Aorta (tissue), 5 donors: ENCODE measurements at regions of chr16 and their contacts with region 1.

Region 1: GRCh38 chr16:81035398-81035974 is at the start of gene ATMIN:
- DNase-seq: peak; percentile 90 to 94
- ATAC-seq: peak; percentile 99
- H3K4me3 ChIP-seq: peak within 1 kb of the TSS; percentile 90 to 97
- H3K27ac ChIP-seq: peak within 1 kb of the TSS in 1 of 2 donors; percentile 69
- H3K4me1 ChIP-seq: peaks cover 4 to 7% of the 10 kb centered on the region in 2 donors
- H3K27me3 ChIP-seq: no peaks in the 10 kb centered on the region
- total RNA-seq, gene ATMIN: 26.1 to 29.1 TPM

Region 2: DNA sequence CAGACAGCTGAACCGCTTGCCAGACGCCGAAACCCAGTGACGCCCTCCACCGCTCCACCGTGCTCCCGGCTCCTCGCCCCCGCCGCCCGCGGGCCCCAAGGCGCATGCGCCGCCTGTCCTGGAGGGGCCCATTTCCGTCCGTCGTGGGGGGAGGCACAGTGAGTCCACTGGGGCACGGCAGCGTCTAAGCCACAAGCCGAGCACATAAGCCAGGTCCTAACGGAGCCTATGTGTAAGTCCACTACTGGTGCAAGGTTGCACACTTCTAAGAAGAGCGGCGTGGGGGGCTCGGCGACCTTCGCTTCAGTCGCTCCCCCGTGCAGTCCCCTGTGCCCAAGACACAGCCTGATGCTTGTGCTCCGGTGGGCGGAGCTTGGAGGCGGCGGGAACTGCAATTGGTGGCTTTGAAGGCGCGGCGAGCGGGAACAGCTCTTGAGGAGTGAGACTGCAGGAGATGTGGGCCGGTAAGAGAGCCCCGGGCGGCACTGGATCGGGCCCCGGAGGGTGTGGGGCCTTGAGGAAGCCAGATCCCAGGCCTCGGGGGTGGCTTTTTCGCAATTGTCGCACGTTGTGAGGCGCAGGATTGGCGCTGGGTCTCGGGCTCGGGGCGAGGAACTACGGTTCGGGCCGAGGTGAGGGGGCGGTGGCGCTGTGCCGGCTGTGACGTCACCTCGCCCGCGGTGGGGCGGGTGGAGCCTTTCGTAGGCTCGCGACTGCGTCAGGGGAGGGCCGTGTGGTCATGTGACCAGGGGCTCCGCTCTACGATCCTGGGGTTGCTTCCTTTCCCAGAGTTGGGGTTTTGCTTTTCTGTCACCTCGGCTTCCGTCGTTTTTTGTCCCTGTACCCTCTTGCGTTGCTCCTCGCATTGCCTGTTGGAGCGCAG is 28.4 kb before region 1 on chr16 and contains the starts of genes CENPN and CMC2:
- intact Hi-C with region 1: loop called in 1 of 2 experiments (anchors 2 kb)
- DNase-seq: peak; percentile 99
- ATAC-seq: peak; percentile 99
- H3K4me3 ChIP-seq: peak within 1 kb of the TSS; percentile 50 to 78
- H3K27ac ChIP-seq: peak within 1 kb of the TSS; percentile 68 to 81
- H3K4me1 ChIP-seq: peaks cover 0 to 3% of the 10 kb centered on the region in 2 donors
- H3K27me3 ChIP-seq: no peaks in the 10 kb centered on the region
- total RNA-seq, gene CENPN: 4.4 to 5.3 TPM
- total RNA-seq, gene CMC2: 33.0 to 33.2 TPM

Region 3: DNA sequence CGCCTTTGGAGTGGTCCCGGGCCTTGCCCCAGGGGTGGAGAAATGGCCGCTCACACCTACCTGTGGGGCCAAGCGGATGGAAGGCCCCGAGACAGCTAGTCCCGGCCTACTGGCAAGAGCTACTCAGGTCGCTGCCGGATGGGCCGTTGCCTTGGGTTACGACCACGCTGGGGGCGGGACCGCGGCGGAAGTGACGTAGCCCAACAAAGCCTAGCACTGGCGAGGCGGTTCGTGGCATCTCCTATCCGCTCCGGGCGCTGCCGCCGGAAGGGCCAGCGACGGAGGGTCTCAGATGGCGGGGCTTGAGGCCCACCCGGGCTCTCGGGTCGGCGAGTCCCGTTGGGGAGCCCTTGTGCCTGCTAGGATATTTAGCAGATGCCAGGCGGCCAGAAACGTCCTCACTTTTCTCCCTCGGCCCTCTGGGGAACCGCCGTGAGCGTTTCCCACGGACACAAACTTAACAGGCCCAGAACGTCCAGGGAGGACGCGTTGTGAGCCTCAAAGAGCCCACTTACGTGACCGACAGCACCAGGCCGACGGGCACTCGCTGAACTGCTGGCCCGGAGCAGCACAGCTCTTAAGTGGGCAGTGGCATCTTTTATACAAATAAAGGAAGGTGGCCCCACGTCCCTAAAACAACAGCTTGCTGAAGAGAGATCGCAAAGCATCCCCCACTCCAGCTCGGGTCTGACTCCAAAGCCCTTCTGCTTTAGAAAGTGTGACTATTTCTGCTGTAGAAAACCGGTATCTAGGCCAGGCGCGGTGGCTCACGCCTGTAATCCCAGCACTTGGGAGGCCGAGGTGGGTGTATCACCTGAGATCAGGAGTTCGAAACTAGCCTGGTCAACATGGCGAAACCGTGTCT is 41.8 kb after region 1 on chr16 and contains the start of gene C16orf46:
- intact Hi-C with region 1: loop called (anchors 5 kb)
- DNase-seq: peak; percentile 98 to 100
- ATAC-seq: peak; percentile 100
- H3K4me3 ChIP-seq: peak within 1 kb of the TSS; percentile 57 to 78
- H3K27ac ChIP-seq: peak within 1 kb of the TSS; percentile 64 to 97
- H3K4me1 ChIP-seq: no peaks in the 10 kb centered on the region
- H3K27me3 ChIP-seq: no peaks in the 10 kb centered on the region
- total RNA-seq, gene C16orf46: 0.24 to 0.49 TPM

Region 4: GRCh38 chr16:81174654-81175571 is 139.4 kb after region 1 on chr16:
- intact Hi-C with region 1: loop called in 1 of 2 experiments (anchors 10 kb)
- DNase-seq: no peak
- ATAC-seq: no peak
- H3K4me3 ChIP-seq: no peak overlapping the region
- H3K27ac ChIP-seq: no peak overlapping the region
- H3K4me1 ChIP-seq: no peaks in the 10 kb centered on the region
- H3K27me3 ChIP-seq: no peaks in the 10 kb centered on the region

Region 5: GRCh38 chr16:81314603-81315270 is 279.3 kb after region 1 on chr16 and contains the start of gene GAN:
- intact Hi-C with region 1: loop called in 1 of 2 experiments (anchors 10 kb)
- DNase-seq: peak; percentile 97 to 98
- ATAC-seq: peak; percentile 98
- H3K4me3 ChIP-seq: peak within 1 kb of the TSS; percentile 86 to 93
- H3K27ac ChIP-seq: peak within 1 kb of the TSS in 1 of 2 donors; percentile 88
- H3K4me1 ChIP-seq: peaks cover 0 to 3% of the 10 kb centered on the region in 2 donors
- H3K27me3 ChIP-seq: no peaks in the 10 kb centered on the region
- total RNA-seq, gene GAN: 11.5 to 11.9 TPM

Region 6: DNA sequence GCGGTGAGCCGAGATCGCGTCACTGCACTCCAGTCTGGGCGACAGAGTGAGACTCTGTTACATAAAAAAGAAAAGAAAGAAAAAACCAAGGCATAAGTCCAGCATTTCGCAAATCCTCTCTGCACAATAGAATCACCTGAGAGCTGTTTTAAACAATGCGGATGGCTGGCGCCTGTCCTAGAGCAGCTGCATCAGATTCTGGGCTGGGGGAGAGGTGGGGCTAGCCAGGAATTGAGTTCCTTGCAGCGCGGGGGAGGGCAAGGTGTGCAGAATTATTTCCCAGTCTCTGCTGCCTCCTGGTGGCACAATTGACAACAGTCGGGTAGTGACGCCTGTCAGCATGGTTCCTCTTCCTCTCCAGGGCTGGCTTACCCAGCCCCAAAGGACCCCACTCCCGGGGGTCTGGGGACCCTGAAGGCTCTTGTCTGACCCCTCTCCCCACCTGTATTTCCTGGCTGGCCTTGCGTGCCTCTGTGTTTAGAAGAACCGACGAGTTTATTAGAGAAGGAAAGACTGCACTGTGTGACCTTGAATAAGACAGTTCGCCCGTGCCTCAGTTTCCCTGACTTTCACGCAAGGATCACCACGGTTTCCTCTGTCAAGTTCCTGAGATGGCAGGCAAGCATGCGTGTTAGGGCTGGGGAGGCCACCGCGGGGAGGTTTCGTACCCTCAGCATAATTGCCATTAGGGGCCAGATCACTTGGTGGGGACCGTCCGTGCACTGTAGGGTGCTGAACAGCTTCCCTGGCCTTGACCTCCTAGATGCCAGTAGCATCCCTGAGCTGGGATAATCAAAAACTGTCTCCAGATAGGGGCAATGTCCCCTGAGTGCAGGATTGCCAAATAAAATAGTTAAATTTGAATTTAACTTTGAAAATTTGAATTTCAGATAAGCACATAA is 702.6 kb after region 1 on chr16:
- intact Hi-C with region 1: loop called in 1 of 2 experiments (anchors 10 kb)
- DNase-seq: peak; percentile 85 to 86
- ATAC-seq: peak; percentile 88
- H3K4me3 ChIP-seq: no peak overlapping the region
- H3K27ac ChIP-seq: no peak overlapping the region
- H3K4me1 ChIP-seq: no peaks in the 10 kb centered on the region
- H3K27me3 ChIP-seq: no peaks in the 10 kb centered on the region